GM12878 (cell line): ENCODE measurements at regions of chr2 and their contacts with region 1.

Region 1: GRCh38 chr2:20157193-20157891 is 67.6 kb downstream of the SDC1 start:
- DNase-seq: peak; percentile 47
- ATAC-seq: peak; percentile 74
- H3K4me3 ChIP-seq: no peak overlapping the region; the same call in 1 of the 2 replicates
- H3K27ac ChIP-seq: peak overlapping the region; percentile 22
- H3K4me1 ChIP-seq: peaks cover 33% of the 10 kb centered on the region
- H3K27me3 ChIP-seq: no peaks in the 10 kb centered on the region
- CTCF ChIP-seq: no peak
- EP300 ChIP-seq: peak in 1 of 2 experiments; percentile 59; a peak in 1 of 4 replicates
- POLR2A ChIP-seq: no peak
- RAD21 ChIP-seq: no peak

Region 2: DNA sequence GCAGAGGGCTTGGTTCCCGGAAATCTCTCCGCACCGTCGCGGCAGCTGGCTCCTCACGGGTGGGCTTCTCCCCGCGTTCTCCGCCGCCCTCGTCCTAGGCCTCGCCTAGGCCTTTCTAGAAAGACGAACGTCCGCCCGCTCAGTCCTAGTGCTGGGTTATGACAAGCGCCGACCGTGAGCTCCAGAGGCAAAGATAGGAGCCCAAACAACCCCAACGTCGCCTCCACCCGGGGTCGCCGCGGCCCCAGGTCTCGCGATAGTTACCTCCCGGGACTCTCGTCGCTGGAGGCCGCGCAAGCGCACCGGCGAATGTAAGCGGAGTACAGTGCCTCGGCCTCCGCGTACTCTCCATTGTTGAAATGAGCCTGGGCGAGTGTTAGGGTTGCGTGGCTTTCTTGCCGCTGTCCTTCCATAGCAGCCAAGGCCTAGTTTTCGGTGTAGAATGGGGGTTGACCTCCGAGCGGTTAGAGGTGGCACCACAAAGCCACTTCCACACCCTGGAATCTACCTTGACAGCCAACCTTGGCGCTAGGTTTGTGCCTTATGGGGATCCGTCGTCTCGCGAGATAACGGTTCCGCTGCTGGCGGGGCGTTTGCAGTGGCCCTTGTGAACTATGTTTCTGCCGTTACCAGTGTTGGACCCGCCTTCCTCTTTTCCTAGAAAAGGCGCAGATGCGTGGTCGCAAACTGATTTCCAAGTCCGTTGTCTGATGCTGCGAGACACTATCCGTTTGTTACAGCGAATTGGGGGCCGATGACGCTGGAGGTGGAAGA is 255.7 kb before region 1 on chr2 and contains the start of gene TTC32:
- CTCF ChIA-PET with region 1: no interaction called
- POLR2A ChIA-PET with region 1: no interaction called
- RAD21 ChIA-PET with region 1: no interaction called
- SMC1A ChIA-PET with region 1: no interaction called
- in situ Hi-C with region 1: no loop called
- intact Hi-C with region 1: no loop called
- DNase-seq: peak; percentile 82
- ATAC-seq: peak; percentile 86
- H3K4me3 ChIP-seq: peak within 1 kb of the TSS; percentile 85
- H3K27ac ChIP-seq: peak within 1 kb of the TSS; percentile 99
- H3K4me1 ChIP-seq: peaks cover 8% of the 10 kb centered on the region
- H3K27me3 ChIP-seq: no peaks in the 10 kb centered on the region
- CTCF ChIP-seq: no peak
- EP300 ChIP-seq: peak in 1 of 2 experiments; percentile 6; a peak in 1 of 4 replicates
- POLR2A ChIP-seq: peak; percentile 98
- RAD21 ChIP-seq: no peak
- polyA plus RNA-seq, gene TTC32: 21.6 to 25.3 TPM

Region 3: GRCh38 chr2:20106746-20107145 is 50.6 kb before region 1 on chr2:
- CTCF ChIA-PET with region 1: no interaction called
- POLR2A ChIA-PET with region 1: no interaction called
- RAD21 ChIA-PET with region 1: no interaction called
- SMC1A ChIA-PET with region 1: no interaction called
- in situ Hi-C with region 1: no loop called
- intact Hi-C with region 1: no loop called
- DNase-seq: no peak
- ATAC-seq: no peak
- H3K4me3 ChIP-seq: no peak overlapping the region
- H3K27ac ChIP-seq: no peak overlapping the region
- H3K4me1 ChIP-seq: no peaks in the 10 kb centered on the region
- H3K27me3 ChIP-seq: no peaks in the 10 kb centered on the region
- CTCF ChIP-seq: no peak
- EP300 ChIP-seq: no peak
- POLR2A ChIP-seq: no peak
- RAD21 ChIP-seq: no peak

Region 4: GRCh38 chr2:20145497-20146193 is 11.7 kb before region 1 on chr2:
- CTCF ChIA-PET with region 1: interaction called, 4 read pairs
- POLR2A ChIA-PET with region 1: interaction called, 4 read pairs
- RAD21 ChIA-PET with region 1: interaction called, 4 read pairs
- SMC1A ChIA-PET with region 1: interaction called, 14 read pairs
- in situ Hi-C with region 1: no loop called
- intact Hi-C with region 1: no loop called
- DNase-seq: peak; percentile 68
- ATAC-seq: peak; percentile 87
- H3K4me3 ChIP-seq: 0 out of 2 replicates have a peak overlapping the region, but pooled peaks have one; percentile 26
- H3K27ac ChIP-seq: peak overlapping the region; percentile 76
- H3K4me1 ChIP-seq: peaks cover 49% of the 10 kb centered on the region
- H3K27me3 ChIP-seq: no peaks in the 10 kb centered on the region
- CTCF ChIP-seq: no peak
- EP300 ChIP-seq: peak in 1 of 2 experiments; percentile 50; a peak in 1 of 4 replicates
- POLR2A ChIP-seq: no peak; the same call in 1 of the 2 replicates
- RAD21 ChIP-seq: no peak

Region 5: DNA sequence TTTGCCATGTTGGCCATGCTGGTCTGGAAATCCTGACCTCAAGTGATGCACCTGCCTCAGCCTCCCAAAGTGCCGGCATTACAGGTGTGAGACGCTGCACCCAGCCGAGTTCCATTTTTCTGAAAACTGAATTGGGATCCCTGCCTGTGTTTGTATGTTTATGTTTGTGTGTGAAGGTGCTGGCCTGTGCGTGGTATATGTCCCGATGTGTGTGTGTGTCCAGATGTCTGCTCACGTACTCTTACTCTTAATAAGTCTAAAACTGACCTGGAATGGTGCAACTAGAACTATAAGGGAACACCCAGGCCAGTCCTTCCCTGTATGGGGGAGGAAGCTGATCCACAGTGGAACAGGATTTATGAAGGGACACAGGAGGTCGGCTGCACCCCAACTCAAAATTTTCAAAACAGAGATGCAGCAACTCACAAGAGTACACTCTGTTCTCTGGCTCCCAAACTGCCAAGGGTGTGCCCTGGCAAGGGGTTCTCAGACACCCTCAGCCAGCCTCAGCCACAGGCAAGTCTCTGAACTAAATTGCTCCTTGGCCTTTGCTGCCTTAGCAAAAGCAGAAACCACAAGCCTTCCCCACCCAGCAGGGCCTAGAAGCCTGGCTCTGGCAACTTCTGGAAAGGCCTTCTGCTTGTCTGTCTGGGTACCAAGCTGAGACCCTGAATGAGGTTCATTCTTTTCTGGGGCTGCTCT is 326.0 kb after region 1 on chr2:
- CTCF ChIA-PET with region 1: no interaction called
- POLR2A ChIA-PET with region 1: no interaction called
- RAD21 ChIA-PET with region 1: no interaction called
- SMC1A ChIA-PET with region 1: no interaction called
- in situ Hi-C with region 1: no loop called
- intact Hi-C with region 1: no loop called
- DNase-seq: no peak
- ATAC-seq: no peak
- H3K4me3 ChIP-seq: no peak overlapping the region
- H3K27ac ChIP-seq: no peak overlapping the region
- H3K4me1 ChIP-seq: no peaks in the 10 kb centered on the region
- H3K27me3 ChIP-seq: no peaks in the 10 kb centered on the region
- CTCF ChIP-seq: no peak
- EP300 ChIP-seq: no peak
- POLR2A ChIP-seq: no peak
- RAD21 ChIP-seq: no peak